Caco-2 (cell line): ENCODE measurements at regions of chr1 and their contacts with region 1.

Region 1: GRCh38 chr1:225021037-225021436 is 91.6 kb downstream of the DNAH14 start:
- DNase-seq: no peak
- H3K4me3 ChIP-seq: no peak overlapping the region
- H3K4me3 Mint-ChIP-seq: no peak overlapping the region
- H3K27ac Mint-ChIP-seq: no peak overlapping the region
- H3K4me1 ChIP-seq: no peaks in the 10 kb centered on the region
- H3K4me1 Mint-ChIP-seq: no peaks in the 10 kb centered on the region
- H3K27me3 ChIP-seq: no peaks in the 10 kb centered on the region
- H3K27me3 Mint-ChIP-seq: no peaks in the 10 kb centered on the region
- CTCF ChIP-seq: no peak

Region 2: DNA sequence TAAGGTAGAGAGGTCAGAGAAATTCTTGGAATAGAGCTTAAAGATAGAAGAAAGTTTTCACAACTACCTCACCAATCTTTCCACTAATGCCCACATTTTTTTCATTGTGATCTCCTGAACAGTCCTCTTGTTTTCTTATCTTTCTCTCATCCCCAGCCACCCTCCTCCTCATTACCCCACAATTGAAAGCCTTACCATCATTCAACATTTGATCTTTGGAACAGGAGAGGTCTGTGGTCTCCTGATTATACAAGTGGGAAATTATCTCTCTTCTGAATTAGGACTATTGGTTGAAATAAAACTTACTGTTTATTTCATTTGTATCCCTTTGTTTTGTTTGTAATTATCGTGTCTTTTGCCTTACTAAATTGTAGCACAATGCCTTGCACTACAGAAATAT is 61.9 kb before region 1 on chr1:
- CTCF ChIA-PET with region 1: no interaction called
- POLR2A ChIA-PET with region 1: no interaction called
- intact Hi-C with region 1: no loop called
- DNase-seq: no peak
- H3K4me3 ChIP-seq: no peak overlapping the region
- H3K4me3 Mint-ChIP-seq: no peak overlapping the region
- H3K27ac Mint-ChIP-seq: no peak overlapping the region
- H3K4me1 ChIP-seq: no peaks in the 10 kb centered on the region
- H3K4me1 Mint-ChIP-seq: no peaks in the 10 kb centered on the region
- H3K27me3 ChIP-seq: no peaks in the 10 kb centered on the region
- H3K27me3 Mint-ChIP-seq: no peaks in the 10 kb centered on the region
- CTCF ChIP-seq: no peak

Region 3: GRCh38 chr1:225228841-225229303 is 207.8 kb after region 1 on chr1:
- CTCF ChIA-PET with region 1: no interaction called
- POLR2A ChIA-PET with region 1: no interaction called
- intact Hi-C with region 1: loop called (anchors 10 kb)
- DNase-seq: peak; percentile 81 to 87
- H3K4me3 ChIP-seq: no peak overlapping the region
- H3K4me3 Mint-ChIP-seq: peak overlapping the region; percentile 33
- H3K27ac Mint-ChIP-seq: peak overlapping the region; percentile 39
- H3K4me1 ChIP-seq: peaks cover 44% of the 10 kb centered on the region
- H3K4me1 Mint-ChIP-seq: peaks cover 42% of the 10 kb centered on the region
- H3K27me3 ChIP-seq: no peaks in the 10 kb centered on the region
- H3K27me3 Mint-ChIP-seq: no peaks in the 10 kb centered on the region
- CTCF ChIP-seq: no peak